Sigmoid colon (tissue), 7 donors: ENCODE measurements at regions of chr5 and their contacts with region 1.

Region 1: GRCh38 chr5:40755407-40756365 is at the start of gene TTC33:
- DNase-seq: peak; percentile 97
- H3K4me3 ChIP-seq: peak within 1 kb of the TSS; percentile 75 to 86 (median 82)
- H3K27ac ChIP-seq: peak within 1 kb of the TSS; percentile 88 to 97 (median 92)
- H3K4me1 ChIP-seq: peaks cover 0 to 20% (median 14%) of the 10 kb centered on the region in 4 donors
- H3K27me3 ChIP-seq: no peaks in the 10 kb centered on the region
- CTCF ChIP-seq: peak; percentile 45 to 64 (median 56)
- EP300 ChIP-seq: no peak
- POLR2A ChIP-seq: peak; percentile 46 to 61
- total RNA-seq, gene TTC33: 18.0 to 33.2 (median 26.0) TPM

Region 2: DNA sequence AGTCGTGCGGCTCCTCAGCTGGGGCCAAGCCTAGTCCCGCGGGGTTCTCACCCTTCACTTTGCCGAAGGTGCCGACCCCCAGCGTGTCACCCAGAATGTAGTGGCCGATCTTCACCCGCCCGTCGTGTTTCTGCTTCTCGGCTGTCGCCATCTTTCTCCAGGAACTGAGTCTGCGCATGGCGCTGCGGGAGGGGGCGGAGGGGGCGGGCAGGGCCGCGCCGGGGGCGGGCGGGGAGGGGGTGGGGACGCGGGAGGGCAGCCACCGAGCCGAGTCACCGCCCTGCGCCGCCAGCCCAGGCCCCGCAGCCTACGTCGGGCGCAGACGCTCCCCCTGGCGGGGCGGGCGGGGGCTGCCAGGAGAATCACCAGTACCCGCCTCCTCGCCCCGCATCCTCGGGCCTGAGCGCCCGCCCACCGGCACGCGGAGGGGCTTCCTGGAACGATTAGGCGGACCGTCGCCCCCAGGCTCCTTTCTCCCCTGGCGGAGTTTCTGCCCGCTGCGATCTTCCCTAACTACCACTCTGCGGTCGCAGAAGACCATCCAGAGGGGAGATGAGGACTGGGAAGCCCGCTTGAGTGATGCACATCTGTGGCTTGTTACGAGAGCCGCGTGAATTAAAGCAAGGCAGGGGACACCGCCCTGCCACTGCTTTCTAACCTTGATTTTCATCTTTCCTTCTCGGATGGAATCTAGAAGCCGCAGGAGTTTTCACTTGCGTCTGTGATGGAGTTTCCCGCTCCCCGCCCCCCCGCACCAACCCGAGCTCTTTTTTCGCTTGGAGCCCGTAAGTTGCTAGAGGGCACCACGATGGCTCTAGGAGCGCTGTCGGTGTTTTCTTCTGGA is 42.5 kb after region 1 on chr5 and contains the start of gene PRKAA1:
- intact Hi-C with region 1: loop called (anchors 1 kb)
- DNase-seq: peak; percentile 95
- H3K4me3 ChIP-seq: peak within 1 kb of the TSS; percentile 97 to 100 (median 99)
- H3K27ac ChIP-seq: peak within 1 kb of the TSS; percentile 95 to 99 (median 98)
- H3K4me1 ChIP-seq: peaks cover 0 to 32% (median 22%) of the 10 kb centered on the region in 4 donors
- H3K27me3 ChIP-seq: no peaks in the 10 kb centered on the region
- CTCF ChIP-seq: peak in 3 of 4 experiments; percentile 32 to 73 (median 33)
- EP300 ChIP-seq: no peak
- POLR2A ChIP-seq: peak; percentile 30 to 56
- total RNA-seq, gene PRKAA1: 63.4 to 98.4 (median 86.7) TPM

Region 3: GRCh38 chr5:40834849-40835787 is 79.4 kb after region 1 on chr5 and contains the start of gene RPL37:
- intact Hi-C with region 1: loop called (anchors 2 kb)
- DNase-seq: peak; percentile 98
- H3K4me3 ChIP-seq: peak within 1 kb of the TSS; percentile 50 to 75 (median 58)
- H3K27ac ChIP-seq: peak within 1 kb of the TSS; percentile 88 to 97 (median 95)
- H3K4me1 ChIP-seq: peaks cover 0 to 34% (median 16%) of the 10 kb centered on the region in 4 donors
- H3K27me3 ChIP-seq: no peaks in the 10 kb centered on the region
- CTCF ChIP-seq: no peak
- EP300 ChIP-seq: peak in 1 of 4 donors; percentile 25
- POLR2A ChIP-seq: peak; percentile 78 to 82
- total RNA-seq, gene RPL37: 120 to 170 (median 149) TPM

Region 4: DNA sequence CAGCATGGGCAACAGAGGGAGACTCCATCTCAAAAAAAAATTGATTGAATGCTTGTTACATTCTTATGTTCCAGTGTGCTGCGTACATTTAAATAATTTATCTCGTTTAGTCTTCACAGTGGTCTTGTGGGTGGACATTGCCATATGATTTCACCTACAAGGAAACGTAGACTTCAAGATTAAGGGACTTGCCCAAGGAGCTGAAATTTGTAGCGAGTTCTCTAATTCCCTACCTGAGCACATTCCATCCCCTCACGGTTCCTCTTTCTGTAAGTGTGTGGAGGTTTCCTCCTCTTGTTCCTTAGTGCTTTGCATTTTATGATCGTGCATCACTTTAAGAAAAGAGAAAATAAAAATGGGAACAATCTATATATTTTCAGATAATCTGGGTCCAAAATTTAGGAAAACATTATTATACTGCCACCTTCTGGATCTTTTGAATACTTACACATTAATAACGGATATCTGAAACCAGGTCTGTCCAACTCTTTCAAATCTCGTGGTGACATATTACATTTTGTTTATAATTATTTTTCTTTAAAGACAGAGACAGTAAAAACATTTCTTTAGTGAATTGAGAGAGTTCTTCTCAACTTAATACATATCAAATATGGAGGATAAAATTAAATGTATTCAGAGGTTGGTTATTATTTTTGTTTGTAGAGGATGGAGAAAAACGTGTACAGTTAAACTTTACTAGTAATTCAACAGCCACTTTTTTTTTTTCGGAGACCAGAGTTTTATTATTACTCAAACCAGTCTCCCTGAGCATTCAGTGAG is 123.7 kb after region 1 on chr5:
- intact Hi-C with region 1: loop called (anchors 2 kb)
- DNase-seq: no peak
- H3K4me3 ChIP-seq: no peak overlapping the region
- H3K27ac ChIP-seq: no peak overlapping the region
- H3K4me1 ChIP-seq: no peaks in the 10 kb centered on the region
- H3K27me3 ChIP-seq: no peaks in the 10 kb centered on the region
- CTCF ChIP-seq: peak; percentile 8 to 51 (median 26)
- EP300 ChIP-seq: no peak
- POLR2A ChIP-seq: no peak